Head of caudate nucleus (tissue), 42 donors: ENCODE measurements at regions of chr9 and their contacts with region 1.

Region 1: DNA sequence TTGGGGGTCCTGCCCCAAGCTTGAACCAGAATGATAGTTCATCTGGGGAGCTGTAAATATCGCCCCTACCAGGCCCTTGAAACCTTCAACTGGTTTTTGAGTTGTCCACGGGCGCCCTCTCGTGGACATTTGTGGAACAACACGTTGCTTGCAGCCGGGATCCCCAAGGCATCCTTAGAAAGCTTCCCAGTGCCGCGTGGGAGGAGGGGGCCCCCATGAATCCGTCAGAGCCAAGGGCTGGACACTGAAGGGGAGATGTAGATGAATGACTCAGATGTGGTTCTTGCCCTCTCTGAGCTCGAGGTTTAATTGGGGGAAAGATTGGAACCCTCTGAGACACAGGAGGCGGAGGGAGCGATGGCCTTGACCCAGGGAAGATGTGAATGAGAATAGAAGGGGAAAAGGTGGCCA is 31.8 kb upstream of the ORM1 start:
- DNase-seq: peak; percentile 26 to 92 (median 80)

Region 2: GRCh38 chr9:114082017-114082762 is 208.9 kb before region 1 on chr9:
- intact Hi-C with region 1: loop called (anchors 5 kb)
- DNase-seq: peak; percentile 71 to 97 (median 93)

Region 3: GRCh38 chr9:114098016-114098935 is 192.8 kb before region 1 on chr9:
- intact Hi-C with region 1: loop called (anchors 5 kb)
- DNase-seq: peak in 34 of 42 donors; percentile 25 to 80 (median 53)

Region 4: DNA sequence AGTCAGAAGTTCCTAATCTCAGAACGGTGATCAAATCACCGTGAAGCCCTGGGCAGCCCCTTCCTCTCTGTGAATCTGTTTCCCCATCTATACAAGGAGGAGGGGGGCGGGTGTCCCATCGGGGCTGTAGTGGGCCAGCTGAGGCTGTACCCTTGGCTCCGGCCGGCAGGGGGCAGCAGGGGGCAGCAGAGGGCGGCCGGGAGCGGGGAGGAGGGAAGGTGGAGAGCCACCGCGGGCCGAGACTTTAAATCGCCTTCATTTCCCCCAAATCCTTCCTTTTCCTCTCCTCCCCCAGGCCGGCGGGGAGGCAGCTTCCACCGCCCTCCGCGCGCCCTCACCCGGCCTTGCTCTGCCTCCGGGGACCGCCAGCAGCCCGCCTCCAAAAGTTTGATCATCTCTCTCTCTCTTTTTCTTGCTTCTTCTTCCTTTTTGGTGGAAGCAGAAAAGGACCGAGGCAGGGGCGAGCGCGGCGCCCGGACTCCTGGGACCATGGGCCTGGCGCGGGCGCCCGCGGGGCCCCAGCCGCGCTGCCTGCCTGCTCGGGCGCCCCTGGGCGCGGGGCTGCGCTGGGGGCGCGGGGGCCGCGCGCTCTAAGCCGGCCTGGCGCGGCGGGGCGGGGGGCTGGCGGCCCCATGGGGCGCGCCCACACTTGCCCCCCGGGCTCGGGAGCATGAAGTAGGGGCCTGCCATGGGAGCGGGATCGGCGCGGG is 135.7 kb before region 1 on chr9 and contains the start of gene COL27A1:
- intact Hi-C with region 1: loop called (anchors 5 kb)
- DNase-seq: peak; percentile 49 to 93 (median 84)

Region 5: DNA sequence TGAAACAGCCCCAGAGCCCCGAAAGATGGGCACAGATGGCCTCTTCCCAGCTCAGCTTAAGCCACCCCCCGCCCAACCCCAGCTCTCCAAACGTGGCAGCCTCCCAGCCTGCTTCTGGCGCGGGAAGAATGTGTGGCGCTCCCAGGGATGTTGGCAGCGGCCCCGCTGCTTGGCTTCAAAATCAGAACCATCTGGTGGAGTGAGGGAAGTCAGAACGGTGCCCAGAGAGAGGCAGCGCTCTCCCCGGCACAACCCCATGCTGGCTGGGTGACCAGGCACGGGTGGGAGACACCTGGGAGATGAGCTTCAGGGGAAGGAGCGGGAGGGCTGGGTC is 40.9 kb before region 1 on chr9:
- intact Hi-C with region 1: no loop called
- DNase-seq: peak; percentile 55 to 94 (median 82)